ENCODE measurements at regions of chr10 and their contacts with region 1.

Region 1: GRCh38 chr10:5873515-5873995 is 16.1 kb downstream of the ANKRD16 start:
- DNase-seq: peak; percentile 39 to 81 (median 58)
- ATAC-seq: peak; percentile 99
- H3K4me3 ChIP-seq: no peak overlapping the region
- H3K4me3 Mint-ChIP-seq: peak overlapping the region; percentile 12
- H3K27ac ChIP-seq: no peak overlapping the region
- H3K27ac Mint-ChIP-seq: no peak overlapping the region
- H3K4me1 ChIP-seq: no peaks in the 10 kb centered on the region
- H3K4me1 Mint-ChIP-seq: peaks cover 6% of the 10 kb centered on the region
- H3K27me3 ChIP-seq: no peaks in the 10 kb centered on the region
- H3K27me3 Mint-ChIP-seq: no peaks in the 10 kb centered on the region
- CTCF ChIP-seq: peak; percentile 68

Region 2: GRCh38 chr10:5434017-5434753 is 439.4 kb before region 1 on chr10:
- CTCF ChIA-PET with region 1: no interaction called
- POLR2A ChIA-PET with region 1: no interaction called
- intact Hi-C with region 1: loop called in 1 of 2 experiments (anchors 2 kb)
- DNase-seq: peak in 3 of 14 experiments; percentile 61 to 66 (median 63)
- ATAC-seq: peak; percentile 83
- H3K4me3 ChIP-seq: no peak overlapping the region
- H3K4me3 Mint-ChIP-seq: no peak overlapping the region
- H3K27ac ChIP-seq: no peak overlapping the region
- H3K27ac Mint-ChIP-seq: no peak overlapping the region
- H3K4me1 ChIP-seq: peaks cover 4% of the 10 kb centered on the region
- H3K4me1 Mint-ChIP-seq: peaks cover 15% of the 10 kb centered on the region
- H3K27me3 ChIP-seq: no peaks in the 10 kb centered on the region
- H3K27me3 Mint-ChIP-seq: no peaks in the 10 kb centered on the region
- CTCF ChIP-seq: peak; percentile 74

Region 3: GRCh38 chr10:5446390-5446926 is 427.1 kb before region 1 on chr10:
- CTCF ChIA-PET with region 1: interaction called, 3 read pairs
- POLR2A ChIA-PET with region 1: no interaction called
- intact Hi-C with region 1: loop called (anchors 1 to 5 kb)
- DNase-seq: peak; percentile 60 to 89 (median 76)
- ATAC-seq: peak; percentile 78
- H3K4me3 ChIP-seq: peak overlapping the region; percentile 56
- H3K4me3 Mint-ChIP-seq: peak overlapping the region; percentile 98
- H3K27ac ChIP-seq: peak overlapping the region in 1 of 2 donors; percentile 43
- H3K27ac Mint-ChIP-seq: peak overlapping the region; percentile 90
- H3K4me1 ChIP-seq: peaks cover 6% of the 10 kb centered on the region
- H3K4me1 Mint-ChIP-seq: peaks cover 52% of the 10 kb centered on the region
- H3K27me3 ChIP-seq: no peaks in the 10 kb centered on the region
- H3K27me3 Mint-ChIP-seq: no peaks in the 10 kb centered on the region
- CTCF ChIP-seq: no peak

Region 4: GRCh38 chr10:5684318-5684970 is 189.1 kb before region 1 on chr10 and contains the start of gene TASOR2:
- CTCF ChIA-PET with region 1: no interaction called
- POLR2A ChIA-PET with region 1: interaction called, 3 read pairs
- intact Hi-C with region 1: loop called in 1 of 2 experiments (anchors 5 kb)
- DNase-seq: peak; percentile 87 to 98 (median 96)
- ATAC-seq: peak; percentile 82
- H3K4me3 ChIP-seq: peak within 1 kb of the TSS; percentile 71
- H3K4me3 Mint-ChIP-seq: peak within 1 kb of the TSS; percentile 98
- H3K27ac ChIP-seq: peak within 1 kb of the TSS; percentile 81 to 98
- H3K27ac Mint-ChIP-seq: peak within 1 kb of the TSS; percentile 98
- H3K4me1 ChIP-seq: peaks cover 27% of the 10 kb centered on the region
- H3K4me1 Mint-ChIP-seq: peaks cover 50% of the 10 kb centered on the region
- H3K27me3 ChIP-seq: no peaks in the 10 kb centered on the region
- H3K27me3 Mint-ChIP-seq: peaks cover 5% of the 10 kb centered on the region
- CTCF ChIP-seq: no peak
- total RNA-seq, gene TASOR2: 50.0 to 51.0 TPM

Region 5: GRCh38 chr10:5752301-5752871 is 121.2 kb before region 1 on chr10:
- CTCF ChIA-PET with region 1: no interaction called
- POLR2A ChIA-PET with region 1: no interaction called
- intact Hi-C with region 1: no loop called
- DNase-seq: no peak
- ATAC-seq: no peak
- H3K4me3 ChIP-seq: no peak overlapping the region
- H3K4me3 Mint-ChIP-seq: no peak overlapping the region
- H3K27ac ChIP-seq: no peak overlapping the region
- H3K27ac Mint-ChIP-seq: peak overlapping the region; percentile 78
- H3K4me1 ChIP-seq: peaks cover 21% of the 10 kb centered on the region
- H3K4me1 Mint-ChIP-seq: peaks cover 39% of the 10 kb centered on the region
- H3K27me3 ChIP-seq: no peaks in the 10 kb centered on the region
- H3K27me3 Mint-ChIP-seq: no peaks in the 10 kb centered on the region
- CTCF ChIP-seq: no peak

Region 6: DNA sequence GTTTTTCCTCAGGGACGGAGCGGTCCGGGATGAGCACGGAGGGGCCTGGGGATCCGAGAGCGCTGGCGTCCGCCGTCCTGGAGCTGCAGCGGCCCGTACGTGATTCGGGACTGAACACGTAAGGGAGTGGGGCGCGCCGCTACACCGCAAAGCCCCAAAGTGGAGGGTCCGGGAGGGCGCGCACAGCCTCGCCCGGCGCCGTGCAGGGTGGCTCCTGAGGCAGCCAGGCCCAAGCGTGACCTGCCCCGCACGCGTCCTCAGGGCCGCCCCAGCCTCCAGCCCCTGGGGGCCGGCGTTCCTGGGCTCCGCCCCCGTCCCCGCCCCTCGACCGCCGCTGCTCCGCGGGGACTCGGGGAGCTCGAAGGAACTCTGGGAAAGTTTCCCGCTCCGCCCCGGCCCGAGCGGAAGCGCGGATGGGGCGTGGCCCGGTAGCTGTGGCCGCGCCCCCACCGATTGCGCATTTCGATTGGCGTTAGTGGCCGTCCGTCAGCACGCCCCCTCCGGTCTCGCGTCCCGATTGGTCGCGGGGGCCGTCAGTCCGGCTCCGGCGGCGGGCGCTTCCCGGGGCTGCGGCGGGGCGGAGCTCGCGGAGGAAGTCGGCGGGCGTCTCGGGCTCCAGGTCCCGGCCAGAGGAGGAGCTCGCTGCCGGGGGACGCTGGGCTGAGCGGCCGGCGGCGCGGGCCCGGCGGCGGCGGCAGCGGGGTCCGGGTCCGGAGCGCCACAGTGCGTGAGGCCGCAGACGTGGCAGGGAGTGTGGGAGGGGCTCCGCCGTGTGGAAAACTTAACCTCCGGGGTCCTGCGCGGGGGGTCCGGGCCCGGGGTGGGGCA is 16.3 kb after region 1 on chr10 and contains the starts of genes ANKRD16 and FBH1:
- CTCF ChIA-PET with region 1: interaction called, 5 read pairs
- POLR2A ChIA-PET with region 1: interaction called, 6 read pairs
- intact Hi-C with region 1: loop called in 1 of 2 experiments (anchors 1 kb)
- DNase-seq: peak; percentile 94 to 99 (median 96)
- ATAC-seq: peak; percentile 87
- H3K4me3 ChIP-seq: peak within 1 kb of the TSS; percentile 79
- H3K4me3 Mint-ChIP-seq: peak within 1 kb of the TSS; percentile 95
- H3K27ac ChIP-seq: peak within 1 kb of the TSS in 1 of 2 donors; percentile 51
- H3K27ac Mint-ChIP-seq: peak within 1 kb of the TSS; percentile 80
- H3K4me1 ChIP-seq: peaks cover 32% of the 10 kb centered on the region
- H3K4me1 Mint-ChIP-seq: peaks cover 60% of the 10 kb centered on the region
- H3K27me3 ChIP-seq: no peaks in the 10 kb centered on the region
- H3K27me3 Mint-ChIP-seq: no peaks in the 10 kb centered on the region
- CTCF ChIP-seq: no peak
- total RNA-seq, gene ANKRD16: 1.4 to 1.8 TPM
- total RNA-seq, gene FBH1: 33.9 to 34.2 TPM

Region 7: DNA sequence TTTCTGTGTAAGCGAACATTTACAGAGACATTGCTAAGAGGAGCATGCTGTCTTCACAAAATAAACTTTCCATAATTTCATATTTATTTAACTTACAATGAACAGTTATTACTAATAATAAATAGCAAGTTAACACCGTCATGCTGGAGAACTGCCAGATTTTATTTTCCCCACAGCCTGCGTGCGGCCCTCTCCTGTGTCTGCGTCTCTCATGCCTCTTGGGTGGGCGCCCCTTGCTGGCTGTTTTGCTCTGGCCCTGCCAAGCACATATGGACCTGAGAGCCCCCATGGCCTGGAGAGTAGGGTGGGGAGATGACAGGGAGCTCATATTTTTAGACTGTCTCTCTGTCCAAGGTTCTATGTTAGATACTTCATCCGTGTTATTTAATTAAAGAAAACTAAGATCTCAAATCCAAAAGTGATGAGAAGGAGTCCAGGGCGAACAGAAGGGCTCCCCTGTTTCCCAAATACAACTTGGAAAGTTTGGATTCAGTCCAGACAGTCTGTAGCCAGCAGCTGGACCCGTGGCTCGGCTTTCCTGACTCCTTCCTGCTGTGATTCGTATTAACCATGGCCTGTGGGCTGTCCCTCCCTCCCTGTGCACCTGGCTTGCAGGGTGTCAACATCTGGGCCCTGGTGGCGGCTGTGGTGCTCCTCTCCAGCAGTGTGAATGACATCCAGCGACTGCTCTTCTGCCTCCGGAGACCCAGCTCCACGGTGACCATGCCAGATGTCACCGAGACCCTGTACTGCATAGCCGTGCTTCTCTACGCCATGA is 37.0 kb after region 1 on chr10:
- CTCF ChIA-PET with region 1: no interaction called
- POLR2A ChIA-PET with region 1: no interaction called
- intact Hi-C with region 1: no loop called
- DNase-seq: no peak
- ATAC-seq: no peak
- H3K4me3 ChIP-seq: no peak overlapping the region
- H3K4me3 Mint-ChIP-seq: no peak overlapping the region
- H3K27ac ChIP-seq: no peak overlapping the region
- H3K27ac Mint-ChIP-seq: no peak overlapping the region
- H3K4me1 ChIP-seq: peaks cover 4% of the 10 kb centered on the region
- H3K4me1 Mint-ChIP-seq: peaks cover 19% of the 10 kb centered on the region
- H3K27me3 ChIP-seq: no peaks in the 10 kb centered on the region
- H3K27me3 Mint-ChIP-seq: no peaks in the 10 kb centered on the region
- CTCF ChIP-seq: no peak